ENCODE measurements at regions of chr3 and their contacts with region 1.

Region 1: GRCh38 chr3:48739955-48740823 is 23.2 kb upstream of the IP6K2 start:
- DNase-seq: peak; percentile 93
- ATAC-seq: peak; percentile 84 to 95

Region 2: GRCh38 chr3:48685602-48686511 is 54.3 kb before region 1 on chr3 and contains the start of gene NCKIPSD:
- intact Hi-C with region 1: loop called in 1 of 2 experiments (anchors 2 kb)
- DNase-seq: peak; percentile 92
- ATAC-seq: peak; percentile 92 to 93
- total RNA-seq, gene NCKIPSD: 19.4 to 27.8 TPM

Measured in left cardiac atrium (tissue), 4 donors.